Ovary (tissue), 10 donors: ENCODE measurements at regions of chr1 and their contacts with region 1.

Region 1: DNA sequence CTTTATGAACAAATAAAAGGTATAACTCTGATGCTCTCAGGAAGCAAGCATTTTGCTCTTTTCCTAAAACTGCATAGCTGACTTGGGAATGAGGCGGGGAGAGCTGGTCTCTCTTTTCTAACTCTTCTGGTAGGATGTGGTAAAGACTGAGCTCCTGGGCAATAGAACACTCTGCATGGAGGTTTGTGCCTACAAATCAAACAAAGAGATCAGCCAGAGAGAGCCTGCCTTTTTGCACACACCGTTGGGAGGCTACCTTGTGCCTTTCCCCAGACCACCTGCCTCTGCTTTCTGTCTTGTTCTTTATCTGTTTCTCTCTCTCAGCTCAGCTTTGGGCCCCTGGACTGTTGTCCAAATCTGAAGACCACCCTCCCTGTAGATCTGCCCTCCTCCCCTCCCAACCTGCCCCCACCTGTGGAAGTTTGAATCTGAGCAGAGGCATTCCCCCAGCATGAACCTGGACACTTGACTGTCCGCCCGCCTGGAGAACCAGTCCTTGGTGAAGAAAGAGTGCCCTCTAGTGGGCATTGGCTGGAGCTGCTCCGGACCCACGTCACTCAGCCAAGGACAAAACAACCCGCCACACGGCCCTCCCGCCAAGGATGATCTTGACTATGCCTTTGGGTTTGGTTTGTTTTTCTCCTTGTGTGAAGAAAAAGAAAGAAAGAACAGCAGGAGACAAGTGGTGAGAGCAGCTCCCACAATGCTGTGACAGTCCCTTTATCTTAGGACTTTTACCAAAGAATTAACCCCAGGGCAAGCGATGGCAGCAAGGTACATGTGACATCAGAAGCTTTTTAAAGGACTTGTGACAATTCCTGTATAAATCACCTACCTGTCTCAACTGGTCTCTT is 228.2 kb downstream of the PBX1 start:
- DNase-seq: peak; percentile 83 to 93 (median 89)
- H3K4me3 ChIP-seq: no peak overlapping the region
- H3K27ac ChIP-seq: peak overlapping the region in 1 of 2 donors; percentile 60
- H3K4me1 ChIP-seq: peaks cover 20% of the 10 kb centered on the region
- H3K27me3 ChIP-seq: no peaks in the 10 kb centered on the region
- CTCF ChIP-seq: peak; percentile 76 to 90 (median 88)
- EP300 ChIP-seq: no peak
- POLR2A ChIP-seq: no peak

Region 2: DNA sequence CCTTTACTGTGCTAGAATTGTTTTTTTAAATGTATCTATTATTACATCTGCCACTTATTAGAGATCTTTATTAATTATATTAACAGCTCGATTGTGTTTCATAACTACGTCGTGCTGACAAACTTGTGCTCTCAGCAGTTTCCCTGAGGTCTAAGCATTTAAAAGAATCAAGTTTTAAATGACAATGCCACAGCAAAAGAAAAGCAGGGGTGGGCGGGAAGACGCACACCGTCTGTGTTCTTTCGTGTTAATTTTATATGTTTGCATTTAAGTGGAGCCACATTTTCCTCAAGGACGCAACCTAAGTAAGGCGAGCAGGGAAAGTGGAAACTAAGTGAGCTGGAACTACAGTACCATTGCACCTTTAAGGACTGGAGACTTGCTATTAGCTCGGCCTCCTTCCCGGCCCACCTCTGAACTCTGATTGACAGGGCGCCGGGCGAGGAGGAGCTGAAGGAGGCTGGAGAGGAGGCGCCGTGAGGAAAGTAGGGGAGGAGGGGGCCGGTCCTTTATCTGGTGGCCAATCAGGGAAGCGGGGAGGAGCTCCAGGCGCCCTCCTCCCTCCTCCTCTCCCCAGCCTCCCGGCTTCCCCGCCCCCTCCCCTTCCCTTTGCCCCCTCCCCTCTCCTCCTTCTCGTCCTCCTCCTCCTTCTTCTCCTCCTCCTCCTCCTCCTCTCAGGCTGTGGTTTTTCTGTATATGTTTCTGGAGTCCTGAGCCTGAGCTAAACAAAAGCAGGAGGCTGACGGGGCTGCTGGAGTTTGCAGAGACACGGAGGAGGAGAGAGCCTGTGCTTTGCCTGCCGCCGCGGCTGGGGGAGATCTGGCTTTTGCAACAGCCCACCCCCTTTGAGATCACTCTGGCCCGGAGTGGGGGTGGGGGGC is 228.5 kb before region 1 on chr1 and contains the start of gene PBX1:
- intact Hi-C with region 1: loop called in 3 of 4 experiments (anchors 10 kb)
- DNase-seq: peak; percentile 95 to 98 (median 97)
- H3K4me3 ChIP-seq: peak within 1 kb of the TSS; percentile 71
- H3K27ac ChIP-seq: peak within 1 kb of the TSS; percentile 73 to 91
- H3K4me1 ChIP-seq: no peaks in the 10 kb centered on the region
- H3K27me3 ChIP-seq: no peaks in the 10 kb centered on the region
- CTCF ChIP-seq: no peak
- EP300 ChIP-seq: no peak
- POLR2A ChIP-seq: peak; percentile 78
- total RNA-seq, gene PBX1: 73.2 to 220 (median 144) TPM

Region 3: GRCh38 chr1:164602480-164603093 is 184.6 kb before region 1 on chr1:
- intact Hi-C with region 1: loop called in 1 of 4 experiments (anchors 10 kb)
- DNase-seq: peak; percentile 62 to 77 (median 68)
- H3K4me3 ChIP-seq: peak overlapping the region; percentile 10
- H3K27ac ChIP-seq: peak overlapping the region; percentile 23 to 27
- H3K4me1 ChIP-seq: peaks cover 9% of the 10 kb centered on the region
- H3K27me3 ChIP-seq: no peaks in the 10 kb centered on the region
- CTCF ChIP-seq: no peak
- EP300 ChIP-seq: no peak
- POLR2A ChIP-seq: no peak

Region 4: GRCh38 chr1:164616022-164616421 is 171.2 kb before region 1 on chr1:
- intact Hi-C with region 1: no loop called
- DNase-seq: no peak
- H3K4me3 ChIP-seq: no peak overlapping the region
- H3K27ac ChIP-seq: no peak overlapping the region
- H3K4me1 ChIP-seq: peaks cover 24% of the 10 kb centered on the region
- H3K27me3 ChIP-seq: no peaks in the 10 kb centered on the region
- CTCF ChIP-seq: no peak
- EP300 ChIP-seq: no peak
- POLR2A ChIP-seq: no peak

Region 5: DNA sequence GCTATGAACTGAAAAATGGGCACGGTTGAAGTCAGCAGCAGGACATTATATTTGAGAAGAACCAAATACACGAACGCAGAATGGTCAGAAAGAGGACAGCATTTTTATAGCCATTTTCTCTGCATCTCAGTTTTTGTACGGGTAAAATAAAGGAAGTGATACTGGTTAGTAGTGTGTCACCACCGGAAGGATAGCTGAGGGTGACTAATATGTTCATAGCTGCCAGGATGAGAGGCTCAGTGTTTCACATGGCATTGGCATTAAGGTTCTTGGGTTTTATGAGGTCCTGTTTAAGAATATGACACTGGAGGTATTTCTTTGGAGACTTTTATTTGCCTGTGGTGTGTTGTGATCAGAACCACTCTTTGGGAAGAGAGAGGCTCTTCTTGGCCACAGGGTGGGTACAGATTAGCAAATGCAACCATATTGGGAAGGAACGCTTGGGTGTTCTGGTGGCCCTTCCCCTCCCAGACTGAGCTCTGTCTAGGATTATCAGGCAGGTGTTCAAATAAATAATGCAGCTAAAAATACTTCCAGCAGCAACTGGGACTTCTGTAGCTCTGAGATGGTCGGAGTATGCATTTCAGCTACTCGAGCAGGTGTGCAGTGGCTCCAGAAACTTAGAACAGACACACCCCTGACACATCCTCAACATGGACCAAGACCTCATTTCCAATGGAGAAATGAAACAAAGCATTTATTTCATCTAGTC is 70.1 kb before region 1 on chr1:
- intact Hi-C with region 1: loop called in 2 of 4 experiments (anchors 10 kb)
- DNase-seq: no peak
- H3K4me3 ChIP-seq: no peak overlapping the region
- H3K27ac ChIP-seq: no peak overlapping the region
- H3K4me1 ChIP-seq: peaks cover 31% of the 10 kb centered on the region
- H3K27me3 ChIP-seq: no peaks in the 10 kb centered on the region
- CTCF ChIP-seq: no peak
- EP300 ChIP-seq: no peak
- POLR2A ChIP-seq: no peak

Region 6: GRCh38 chr1:164726235-164726634 is 61.0 kb before region 1 on chr1:
- intact Hi-C with region 1: loop called in 1 of 4 experiments (anchors 10 kb)
- DNase-seq: no peak
- H3K4me3 ChIP-seq: no peak overlapping the region
- H3K27ac ChIP-seq: no peak overlapping the region
- H3K4me1 ChIP-seq: peaks cover 17% of the 10 kb centered on the region
- H3K27me3 ChIP-seq: no peaks in the 10 kb centered on the region
- CTCF ChIP-seq: no peak
- EP300 ChIP-seq: no peak
- POLR2A ChIP-seq: no peak

Region 7: GRCh38 chr1:165073185-165074007 is 286.2 kb after region 1 on chr1:
- intact Hi-C with region 1: loop called in 1 of 4 experiments (anchors 5 kb)
- DNase-seq: no peak
- H3K4me3 ChIP-seq: no peak overlapping the region
- H3K27ac ChIP-seq: no peak overlapping the region
- H3K4me1 ChIP-seq: no peaks in the 10 kb centered on the region
- H3K27me3 ChIP-seq: no peaks in the 10 kb centered on the region
- CTCF ChIP-seq: peak; percentile 53 to 64 (median 59)
- EP300 ChIP-seq: no peak
- POLR2A ChIP-seq: no peak